Activated CD8-positive, alpha-beta T cell treated with anti-CD3 and anti-CD28 coated beads for 36 hours (primary cell): ENCODE measurements at regions of chr11 and their contacts with region 1.

Region 1: GRCh38 chr11:35040221-35040942 is 98.6 kb upstream of the CD44 start:
- DNase-seq: peak; percentile 84
- ATAC-seq: peak; percentile 83
- H3K4me3 Mint-ChIP-seq: peak overlapping the region; percentile 63
- H3K27ac Mint-ChIP-seq: peak overlapping the region; percentile 91
- H3K4me1 Mint-ChIP-seq: peaks cover 71% of the 10 kb centered on the region
- H3K27me3 Mint-ChIP-seq: no peaks in the 10 kb centered on the region
- CTCF ChIP-seq: no peak

Region 2: DNA sequence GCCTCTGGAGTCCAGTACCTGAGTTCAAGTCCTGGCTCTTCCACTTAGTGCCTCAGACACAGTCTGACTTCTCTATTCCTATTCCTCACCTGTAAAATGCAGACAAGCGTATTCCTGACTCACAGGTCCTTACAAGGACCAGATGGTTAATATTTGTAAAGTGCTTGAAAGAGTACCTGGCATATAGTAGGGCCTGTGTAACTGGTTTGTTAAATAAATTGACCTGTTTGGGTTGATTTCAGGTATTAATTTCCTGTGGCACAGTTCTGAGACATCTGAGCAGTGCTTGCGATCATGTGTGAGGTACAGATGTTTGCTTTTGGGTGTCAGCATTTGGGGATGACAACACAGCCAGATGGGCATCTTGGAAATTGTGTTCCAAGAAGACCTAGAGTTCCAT is 251.7 kb before region 1 on chr11:
- CTCF ChIA-PET with region 1: no interaction called
- POLR2A ChIA-PET with region 1: no interaction called
- intact Hi-C with region 1: no loop called
- DNase-seq: no peak
- ATAC-seq: no peak
- H3K4me3 Mint-ChIP-seq: no peak overlapping the region
- H3K27ac Mint-ChIP-seq: no peak overlapping the region
- H3K4me1 Mint-ChIP-seq: no peaks in the 10 kb centered on the region
- H3K27me3 Mint-ChIP-seq: peaks cover 11% of the 10 kb centered on the region
- CTCF ChIP-seq: no peak

Region 3: GRCh38 chr11:35066783-35067423 is 26.5 kb after region 1 on chr11:
- CTCF ChIA-PET with region 1: interaction called, 6 read pairs
- POLR2A ChIA-PET with region 1: interaction called, 5 read pairs
- intact Hi-C with region 1: loop called (anchors 2 kb)
- DNase-seq: peak; percentile 83
- ATAC-seq: peak; percentile 79
- H3K4me3 Mint-ChIP-seq: no peak overlapping the region
- H3K27ac Mint-ChIP-seq: peak overlapping the region; percentile 68
- H3K4me1 Mint-ChIP-seq: peaks cover 30% of the 10 kb centered on the region
- H3K27me3 Mint-ChIP-seq: no peaks in the 10 kb centered on the region
- CTCF ChIP-seq: no peak

Region 4: GRCh38 chr11:35082321-35083182 is 42.2 kb after region 1 on chr11:
- CTCF ChIA-PET with region 1: no interaction called
- POLR2A ChIA-PET with region 1: interaction called, 3 read pairs
- intact Hi-C with region 1: loop called (anchors 2 kb)
- DNase-seq: peak; percentile 93
- ATAC-seq: peak; percentile 80
- H3K4me3 Mint-ChIP-seq: peak overlapping the region; percentile 58
- H3K27ac Mint-ChIP-seq: peak overlapping the region; percentile 89
- H3K4me1 Mint-ChIP-seq: peaks cover 80% of the 10 kb centered on the region
- H3K27me3 Mint-ChIP-seq: no peaks in the 10 kb centered on the region
- CTCF ChIP-seq: no peak